ENCODE measurements at regions of chr16 and their contacts with region 1.

Region 1: DNA sequence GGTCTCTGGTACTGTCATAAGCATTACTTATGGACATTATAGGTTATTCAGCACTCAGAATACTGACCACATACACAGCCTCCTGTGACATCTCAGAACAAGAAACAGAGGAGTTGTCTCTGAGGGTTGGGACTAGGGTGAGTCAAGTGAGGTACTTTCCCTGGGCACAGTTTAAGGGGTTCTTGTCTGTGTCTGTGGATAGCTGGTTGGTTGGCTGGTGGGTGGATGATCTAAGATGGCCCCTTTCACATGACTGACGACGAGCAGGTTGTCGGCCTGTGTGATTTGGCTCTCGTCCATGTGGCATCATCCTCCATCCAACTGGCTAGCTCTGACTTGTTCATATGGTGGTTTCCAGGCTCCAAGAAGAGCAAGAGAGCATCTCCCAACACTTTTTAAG is 163.9 kb downstream of the PRKCB start:
- DNase-seq: no peak
- ATAC-seq: no peak

Region 2: DNA sequence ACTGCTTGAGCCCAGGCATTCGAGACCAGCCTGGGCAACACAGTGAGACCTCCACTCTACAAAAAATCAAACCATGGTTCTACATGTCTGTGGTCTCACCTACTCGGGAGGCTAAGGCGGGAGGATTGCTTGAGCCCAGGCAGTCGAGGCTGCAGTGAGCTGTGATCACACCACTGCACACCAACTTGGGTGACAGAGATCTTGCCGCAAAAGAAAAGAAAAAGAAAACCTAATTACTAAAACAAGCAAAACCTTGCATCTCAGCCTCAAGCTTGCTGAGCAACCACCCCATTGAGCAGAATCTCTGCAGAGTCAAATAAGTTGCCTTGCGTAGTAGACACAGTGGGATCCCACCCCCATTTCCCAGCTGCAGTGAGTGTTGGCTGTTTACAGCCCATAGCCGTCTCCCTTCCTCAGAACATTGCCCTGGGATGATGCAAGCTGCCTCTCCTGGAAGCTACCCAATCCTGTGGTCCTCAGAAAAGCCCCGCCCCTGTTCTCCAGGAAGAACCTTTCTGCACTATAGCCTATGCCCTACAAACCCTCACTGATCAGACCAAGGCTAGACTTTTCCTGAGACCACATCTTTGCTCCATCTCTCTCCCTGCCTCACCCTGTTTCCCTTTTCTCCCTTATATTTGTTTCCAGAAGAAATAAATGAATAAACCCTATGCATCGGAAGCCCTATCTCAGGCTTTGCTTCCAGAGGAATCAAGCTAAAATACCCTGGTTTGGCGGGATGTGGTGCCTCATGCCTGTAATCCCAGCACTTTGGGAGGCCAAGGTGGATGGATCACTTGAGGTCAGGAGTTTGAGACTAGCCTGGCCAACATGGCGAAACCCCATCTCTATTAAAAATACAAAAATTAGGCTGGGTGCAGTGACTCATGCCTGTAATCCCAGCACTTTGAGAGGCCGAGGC is 269.9 kb before region 1 on chr16:
- intact Hi-C with region 1: loop called in 1 of 2 experiments (anchors 10 kb)
- DNase-seq: no peak
- ATAC-seq: peak in 1 of 2 donors; percentile 57

Measured in left cardiac atrium (tissue), 4 donors.